ENCODE measurements at regions of chr9 and their contacts with region 1.

Region 1: GRCh38 chr9:20884985-20885593 is 146.4 kb downstream of the HACD4 start:
- DNase-seq: peak; percentile 51
- H3K4me3 ChIP-seq: no peak overlapping the region
- H3K27ac ChIP-seq: no peak overlapping the region
- H3K4me1 ChIP-seq: no peaks in the 10 kb centered on the region
- H3K27me3 ChIP-seq: no peaks in the 10 kb centered on the region
- CTCF ChIP-seq: peak; percentile 44 to 59
- POLR2A ChIP-seq: no peak

Region 2: DNA sequence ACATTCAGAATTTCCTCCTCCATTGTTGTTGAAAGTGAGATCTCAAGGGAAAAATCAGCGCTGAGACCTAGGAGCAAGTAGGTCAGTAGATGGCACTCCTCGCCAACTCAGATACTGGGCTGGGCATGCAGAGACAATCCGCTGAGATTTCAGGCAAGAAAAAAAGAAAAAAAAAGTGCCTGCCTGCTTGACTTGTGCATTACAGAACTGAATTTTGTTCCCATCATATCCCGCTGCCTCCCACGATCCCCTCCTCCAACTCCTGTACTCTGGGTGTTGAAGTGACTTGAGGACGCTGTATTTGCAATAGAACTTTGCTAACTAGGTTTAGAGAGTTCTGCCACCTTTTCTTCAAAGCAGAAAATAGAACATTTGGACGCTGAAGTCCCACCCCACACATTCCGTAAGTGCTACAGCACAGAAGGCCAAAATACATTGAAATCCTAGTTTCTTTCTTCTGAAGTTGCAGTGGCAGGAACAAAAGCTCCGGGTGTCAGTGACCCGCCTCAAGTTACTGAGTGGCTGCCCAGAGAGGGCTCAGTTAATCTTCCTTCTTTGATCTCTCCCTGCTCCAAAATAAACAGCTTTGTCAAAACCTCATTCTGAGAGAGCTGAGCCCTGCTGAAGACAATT is 528.6 kb before region 1 on chr9:
- CTCF ChIA-PET with region 1: interaction called, 7 read pairs
- POLR2A ChIA-PET with region 1: no interaction called
- dilution Hi-C with region 1: no loop called
- intact Hi-C with region 1: loop called (anchors 2 kb)
- DNase-seq: peak; percentile 96
- H3K4me3 ChIP-seq: peak overlapping the region in 2 of 3 experiments; percentile 13 to 53
- H3K27ac ChIP-seq: peak overlapping the region; percentile 32
- H3K4me1 ChIP-seq: peaks cover 19% of the 10 kb centered on the region
- H3K27me3 ChIP-seq: no peaks in the 10 kb centered on the region
- CTCF ChIP-seq: peak; percentile 66 to 82
- POLR2A ChIP-seq: no peak

Region 3: DNA sequence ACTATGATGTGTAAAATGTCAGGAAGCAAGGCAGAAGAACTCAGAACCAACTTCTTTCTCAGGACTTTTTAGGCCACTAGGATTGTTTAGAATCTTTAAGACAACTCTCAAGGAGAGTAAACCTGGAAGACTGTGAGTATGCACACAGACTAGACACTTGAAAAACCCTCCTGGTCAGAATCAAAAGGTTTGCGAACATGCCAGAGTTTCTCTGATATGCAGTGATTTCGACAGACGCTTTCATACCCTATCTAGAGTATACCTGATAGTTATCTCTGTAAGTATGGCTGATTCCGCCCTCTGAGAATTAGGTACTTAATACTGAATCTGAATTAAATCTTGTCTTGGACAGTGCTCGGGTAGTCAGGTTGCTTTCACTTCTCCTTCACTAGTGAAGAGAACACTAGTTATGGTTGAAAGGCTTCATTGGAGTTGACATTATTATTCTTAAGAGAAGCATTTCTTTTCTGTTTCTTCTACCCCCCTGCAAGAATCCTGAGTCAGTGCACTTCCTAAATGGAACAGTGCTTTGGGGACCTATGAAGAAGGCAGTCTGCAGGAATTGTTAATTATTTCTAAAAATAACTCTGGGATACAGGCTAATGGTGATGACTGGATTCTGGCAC is 11.7 kb before region 1 on chr9:
- CTCF ChIA-PET with region 1: interaction called, 21 read pairs
- POLR2A ChIA-PET with region 1: no interaction called
- dilution Hi-C with region 1: no loop called
- intact Hi-C with region 1: no loop called
- DNase-seq: no peak
- H3K4me3 ChIP-seq: no peak overlapping the region
- H3K27ac ChIP-seq: no peak overlapping the region
- H3K4me1 ChIP-seq: no peaks in the 10 kb centered on the region
- H3K27me3 ChIP-seq: no peaks in the 10 kb centered on the region
- CTCF ChIP-seq: no peak
- POLR2A ChIP-seq: no peak

Measured in endothelial cell of umbilical vein (primary cell).